Activated T-helper 1 cell treated with anti-CD3 and anti-CD28 coated beads, Interleukin-12 subunit alpha, Interleukin-12 subunit beta, Interleukin-2, Interleukin-4 antibody, amounts not matched to agents 30 ng/mL and 10 ng/mL and 1 ng/mL, durations not matched to agents 14 hours and 24 hours and 36 hours (primary cell): ENCODE measurements at regions of chr2 and their contacts with region 1.

Region 1: GRCh38 chr2:8544786-8545694 is 136.8 kb upstream of the ID2 start:
- DNase-seq: peak; percentile 83
- H3K4me3 Mint-ChIP-seq: peak overlapping the region; percentile 59
- H3K27ac Mint-ChIP-seq: peak overlapping the region; percentile 99
- H3K4me1 Mint-ChIP-seq: peaks cover 80% of the 10 kb centered on the region
- H3K27me3 Mint-ChIP-seq: no peaks in the 10 kb centered on the region

Region 2: GRCh38 chr2:7567646-7568045 is 977.4 kb before region 1 on chr2:
- intact Hi-C with region 1: loop called (anchors 1 kb)
- DNase-seq: peak; percentile 47
- H3K4me3 Mint-ChIP-seq: peak overlapping the region; percentile 25
- H3K27ac Mint-ChIP-seq: peak overlapping the region; percentile 90
- H3K4me1 Mint-ChIP-seq: peaks cover 59% of the 10 kb centered on the region
- H3K27me3 Mint-ChIP-seq: no peaks in the 10 kb centered on the region

Region 3: DNA sequence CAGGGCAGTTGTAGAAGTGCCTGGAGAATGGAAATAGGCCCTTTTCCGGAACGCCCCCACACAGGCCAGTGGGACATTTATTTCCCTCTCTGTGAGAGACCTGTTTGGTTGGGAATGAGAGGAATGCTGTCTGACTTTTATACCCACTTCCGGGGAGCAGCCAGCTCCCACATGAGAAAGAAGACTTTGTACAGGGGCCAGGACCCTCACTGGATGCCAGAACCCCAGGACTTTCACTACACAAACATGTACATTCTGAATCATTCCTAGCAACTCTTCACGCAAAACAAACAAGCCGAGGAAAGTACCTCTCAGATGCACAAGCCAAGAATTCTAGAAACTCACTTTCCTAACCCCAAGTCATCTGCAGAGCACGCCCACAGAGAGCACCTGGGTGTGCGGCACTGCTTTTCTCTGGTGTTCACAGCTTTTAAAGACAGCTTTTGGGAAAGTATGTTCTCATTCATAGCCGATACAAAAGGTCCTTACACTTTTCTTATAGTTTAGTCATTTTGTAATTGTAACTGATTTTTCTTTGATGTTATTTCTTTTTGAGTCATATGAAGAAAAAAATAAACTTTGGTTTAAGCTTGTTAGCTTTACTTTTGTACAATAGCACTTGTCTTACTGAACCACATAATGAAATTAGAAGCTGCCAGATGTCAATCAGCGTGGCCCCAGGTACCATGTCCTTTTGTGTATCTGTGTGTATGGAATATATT is 719.3 kb before region 1 on chr2:
- intact Hi-C with region 1: loop called (anchors 1 kb)
- DNase-seq: peak; percentile 55
- H3K4me3 Mint-ChIP-seq: peak overlapping the region; percentile 23
- H3K27ac Mint-ChIP-seq: peak overlapping the region; percentile 97
- H3K4me1 Mint-ChIP-seq: peaks cover 41% of the 10 kb centered on the region
- H3K27me3 Mint-ChIP-seq: peaks cover 4% of the 10 kb centered on the region

Region 4: GRCh38 chr2:8234757-8235374 is 310.2 kb before region 1 on chr2:
- intact Hi-C with region 1: loop called (anchors 1 kb)
- DNase-seq: no peak
- H3K4me3 Mint-ChIP-seq: no peak overlapping the region
- H3K27ac Mint-ChIP-seq: no peak overlapping the region
- H3K4me1 Mint-ChIP-seq: peaks cover 53% of the 10 kb centered on the region
- H3K27me3 Mint-ChIP-seq: peaks cover 9% of the 10 kb centered on the region

Region 5: DNA sequence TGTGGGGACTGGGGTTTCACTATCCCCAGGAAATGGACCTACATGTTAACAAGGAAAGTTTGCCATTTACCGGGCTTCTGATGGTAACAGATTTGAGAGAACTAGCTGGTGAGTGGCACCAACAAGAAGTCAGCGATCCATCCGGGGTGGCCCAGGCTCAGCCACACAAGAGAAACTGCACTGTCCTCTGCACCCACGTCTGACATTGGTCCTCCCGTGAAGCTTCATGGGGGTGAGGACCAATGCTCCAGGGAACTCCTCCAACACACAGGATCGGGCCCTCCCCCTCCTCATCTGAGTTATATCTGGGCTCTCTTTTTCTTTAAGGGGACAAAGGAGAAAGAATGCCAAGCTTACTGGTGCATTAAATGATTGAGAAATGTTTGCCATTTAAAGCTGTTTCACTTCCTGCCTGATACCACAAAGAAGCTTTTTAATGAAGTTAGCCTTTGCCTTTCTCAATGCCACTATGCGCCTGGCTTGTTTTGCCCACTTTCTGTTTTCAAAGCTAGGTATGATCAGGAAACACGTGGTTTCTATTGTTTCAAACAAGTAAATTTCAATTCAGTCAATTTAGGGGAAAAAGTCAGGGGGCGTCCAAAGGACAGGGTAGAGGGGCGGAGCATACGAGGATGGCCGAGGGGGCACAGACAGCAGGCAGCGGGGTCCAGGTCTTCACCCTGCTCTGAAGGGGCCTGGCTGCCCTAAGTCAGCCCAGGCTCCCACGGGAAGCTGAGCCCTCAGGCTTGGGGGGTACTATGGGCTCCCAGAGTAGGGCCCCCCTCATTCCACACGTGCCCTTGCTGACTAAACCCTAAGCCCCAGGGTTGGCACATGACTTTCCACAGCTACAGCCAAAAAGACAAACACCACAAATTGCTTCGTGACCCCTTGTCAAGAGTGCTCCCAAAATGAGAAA is 67.2 kb before region 1 on chr2:
- intact Hi-C with region 1: loop called (anchors 1 kb)
- DNase-seq: no peak
- H3K4me3 Mint-ChIP-seq: peak overlapping the region; percentile 31
- H3K27ac Mint-ChIP-seq: peak overlapping the region; percentile 76
- H3K4me1 Mint-ChIP-seq: peaks cover 97% of the 10 kb centered on the region
- H3K27me3 Mint-ChIP-seq: no peaks in the 10 kb centered on the region

Region 6: DNA sequence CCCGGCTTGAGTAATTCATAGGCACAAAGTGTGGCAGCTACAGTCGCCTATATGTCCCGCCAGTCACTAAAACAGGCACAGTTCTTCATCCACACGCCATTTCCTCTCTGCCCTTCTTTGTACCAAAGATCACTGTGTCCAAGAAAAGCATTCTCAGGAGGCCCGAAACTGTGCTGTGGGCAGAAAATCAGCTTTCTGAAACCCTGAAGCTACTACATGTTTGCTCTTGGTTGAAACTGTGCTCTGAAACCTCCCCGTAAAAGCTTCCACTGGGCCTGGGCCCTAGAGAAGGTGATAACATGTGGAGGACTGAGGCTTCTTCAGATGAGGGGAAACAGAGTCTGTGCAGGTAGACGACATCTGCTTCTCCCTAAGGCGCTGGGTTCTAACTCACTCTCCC is 61.2 kb after region 1 on chr2:
- intact Hi-C with region 1: loop called (anchors 1 kb)
- DNase-seq: no peak
- H3K4me3 Mint-ChIP-seq: no peak overlapping the region
- H3K27ac Mint-ChIP-seq: no peak overlapping the region
- H3K4me1 Mint-ChIP-seq: peaks cover 44% of the 10 kb centered on the region
- H3K27me3 Mint-ChIP-seq: peaks cover 1% of the 10 kb centered on the region

Region 7: DNA sequence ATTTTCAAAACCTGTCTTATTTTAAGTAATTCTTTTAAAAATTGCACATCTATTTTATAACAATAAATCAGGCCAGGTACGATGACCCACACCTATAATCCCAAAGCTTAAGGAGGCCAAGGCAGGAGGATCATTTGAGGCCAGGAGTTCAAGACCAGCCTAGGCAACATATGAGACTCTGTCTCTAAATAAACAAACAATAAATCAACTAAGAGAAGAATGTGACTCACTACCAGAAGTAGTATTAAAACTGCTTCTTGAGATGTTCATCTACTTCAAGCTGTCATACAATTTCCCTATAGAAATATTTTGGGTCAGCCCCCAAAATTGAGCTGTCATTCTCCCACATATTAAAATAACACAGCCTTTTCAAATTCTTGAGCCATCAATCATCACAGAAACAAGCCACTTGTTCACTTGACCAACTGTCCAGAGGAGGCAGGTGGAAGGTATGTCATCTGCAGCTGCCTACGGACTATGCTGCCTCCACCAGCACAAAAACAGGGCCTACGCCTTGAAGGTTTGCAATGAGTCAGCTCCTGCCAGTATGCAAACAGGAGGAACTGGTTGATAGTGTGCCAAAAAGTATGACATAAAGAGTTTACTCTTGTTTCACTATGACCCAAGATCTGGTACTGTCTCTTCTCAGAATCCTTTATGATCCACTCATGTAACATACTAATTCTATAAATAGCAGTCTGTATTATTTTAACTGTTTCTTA is 258.8 kb after region 1 on chr2:
- intact Hi-C with region 1: no loop called
- DNase-seq: peak; percentile 47
- H3K4me3 Mint-ChIP-seq: no peak overlapping the region
- H3K27ac Mint-ChIP-seq: peak overlapping the region; percentile 83
- H3K4me1 Mint-ChIP-seq: peaks cover 28% of the 10 kb centered on the region
- H3K27me3 Mint-ChIP-seq: no peaks in the 10 kb centered on the region